B cell (primary cell): ENCODE measurements at regions of chr2 and their contacts with region 1.

Region 1: GRCh38 chr2:12716282-12717190 is at the start of gene TRIB2:
- DNase-seq: peak; percentile 94
- ATAC-seq: peak; percentile 83
- H3K4me3 ChIP-seq: peak within 1 kb of the TSS; percentile 79 to 99 (median 93)
- H3K4me3 Mint-ChIP-seq: peak within 1 kb of the TSS; percentile 93
- H3K27ac ChIP-seq: peak within 1 kb of the TSS; percentile 79 to 89
- H3K27ac Mint-ChIP-seq: peak within 1 kb of the TSS; percentile 92
- H3K4me1 ChIP-seq: peaks cover 31 to 36% of the 10 kb centered on the region in 2 donors
- H3K4me1 Mint-ChIP-seq: peaks cover 47% of the 10 kb centered on the region
- H3K27me3 ChIP-seq: no peaks in the 10 kb centered on the region
- H3K27me3 Mint-ChIP-seq: no peaks in the 10 kb centered on the region
- CTCF ChIP-seq: peak; percentile 63
- total RNA-seq, gene TRIB2: 35.0 and 36.3 TPM in 2 replicates

Region 2: DNA sequence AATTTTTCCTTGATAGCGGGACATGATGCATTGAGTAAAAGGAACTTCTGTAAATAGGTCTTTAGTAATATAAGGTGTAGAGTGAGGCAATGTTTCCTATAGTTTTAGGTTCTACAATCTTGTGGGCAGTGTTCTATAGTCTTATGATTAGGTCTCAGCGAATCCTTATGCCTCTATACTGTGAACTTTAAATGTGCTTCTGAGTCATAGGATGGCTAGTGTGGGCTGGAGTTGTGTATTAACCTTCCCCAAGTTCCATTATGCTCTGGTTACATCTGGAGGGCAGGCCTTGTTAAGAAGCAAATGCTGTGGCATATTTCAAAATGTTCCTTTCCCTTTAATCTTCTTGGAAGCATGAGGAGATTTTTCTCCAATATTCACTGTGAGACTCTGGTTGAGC is 1445.6 kb before region 1 on chr2:
- CTCF ChIA-PET with region 1: no interaction called
- POLR2A ChIA-PET with region 1: no interaction called
- intact Hi-C with region 1: no loop called
- DNase-seq: no peak
- ATAC-seq: no peak
- H3K4me3 ChIP-seq: no peak overlapping the region
- H3K4me3 Mint-ChIP-seq: no peak overlapping the region
- H3K27ac ChIP-seq: no peak overlapping the region
- H3K27ac Mint-ChIP-seq: no peak overlapping the region
- H3K4me1 ChIP-seq: peaks cover 0 to 2% of the 10 kb centered on the region in 2 donors
- H3K4me1 Mint-ChIP-seq: peaks cover 11% of the 10 kb centered on the region
- H3K27me3 ChIP-seq: no peaks in the 10 kb centered on the region
- H3K27me3 Mint-ChIP-seq: no peaks in the 10 kb centered on the region
- CTCF ChIP-seq: no peak

Region 3: DNA sequence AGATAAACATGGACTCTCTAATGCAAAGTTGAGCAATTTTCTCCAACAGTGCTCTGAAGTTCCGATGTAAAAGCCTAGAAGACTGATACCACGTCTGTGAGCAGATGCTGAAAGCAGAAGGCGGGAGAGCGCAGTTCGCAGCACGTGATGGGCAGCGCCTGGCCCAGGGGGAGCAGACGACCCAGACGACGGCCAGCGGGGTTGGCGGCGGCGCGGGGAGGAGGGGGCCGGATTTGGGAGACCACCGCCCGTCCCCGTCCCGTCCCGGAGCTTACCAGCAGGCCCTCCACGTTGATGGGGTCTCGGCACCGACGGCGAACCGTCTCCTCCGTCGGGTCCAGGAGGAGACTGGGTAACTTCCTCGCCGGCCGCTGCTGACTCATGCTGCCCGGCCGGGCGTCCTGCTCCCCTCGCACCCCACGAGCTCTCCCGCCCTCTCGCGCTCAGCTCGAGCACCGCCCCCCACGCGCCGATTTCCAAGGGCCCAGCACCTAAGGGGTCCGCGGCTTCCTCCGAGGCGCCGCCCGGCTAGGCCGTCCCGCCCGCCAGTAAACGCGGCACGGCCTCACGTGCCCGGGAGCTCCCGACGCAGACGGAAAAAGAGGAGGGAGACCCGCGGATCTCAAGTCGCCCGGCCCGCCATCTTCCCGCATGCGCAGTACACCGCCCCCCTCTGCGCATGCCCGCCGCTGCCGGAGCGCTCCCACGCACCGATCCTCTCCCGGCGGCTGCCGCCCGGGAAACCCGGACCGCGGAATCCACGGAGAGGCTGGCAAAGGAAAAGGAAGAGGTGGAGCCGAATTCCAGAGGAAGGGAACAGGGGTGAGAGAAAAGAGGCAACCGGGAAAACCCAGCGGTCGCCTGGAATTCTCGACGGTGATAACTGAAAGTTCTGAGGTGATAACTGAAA is 1250.8 kb before region 1 on chr2 and contains the start of gene E2F6:
- CTCF ChIA-PET with region 1: no interaction called
- POLR2A ChIA-PET with region 1: no interaction called
- intact Hi-C with region 1: loop called (anchors 10 kb)
- DNase-seq: peak; percentile 88
- ATAC-seq: peak; percentile 73
- H3K4me3 ChIP-seq: peak within 1 kb of the TSS; percentile 66 to 97 (median 92)
- H3K4me3 Mint-ChIP-seq: peak within 1 kb of the TSS; percentile 97
- H3K27ac ChIP-seq: peak within 1 kb of the TSS; percentile 1 to 79
- H3K27ac Mint-ChIP-seq: peak within 1 kb of the TSS; percentile 94
- H3K4me1 ChIP-seq: peaks cover 7 to 13% of the 10 kb centered on the region in 2 donors
- H3K4me1 Mint-ChIP-seq: peaks cover 23% of the 10 kb centered on the region
- H3K27me3 ChIP-seq: no peaks in the 10 kb centered on the region
- H3K27me3 Mint-ChIP-seq: no peaks in the 10 kb centered on the region
- CTCF ChIP-seq: no peak
- total RNA-seq, gene E2F6: 10.0 and 10.1 TPM in 2 replicates

Region 4: DNA sequence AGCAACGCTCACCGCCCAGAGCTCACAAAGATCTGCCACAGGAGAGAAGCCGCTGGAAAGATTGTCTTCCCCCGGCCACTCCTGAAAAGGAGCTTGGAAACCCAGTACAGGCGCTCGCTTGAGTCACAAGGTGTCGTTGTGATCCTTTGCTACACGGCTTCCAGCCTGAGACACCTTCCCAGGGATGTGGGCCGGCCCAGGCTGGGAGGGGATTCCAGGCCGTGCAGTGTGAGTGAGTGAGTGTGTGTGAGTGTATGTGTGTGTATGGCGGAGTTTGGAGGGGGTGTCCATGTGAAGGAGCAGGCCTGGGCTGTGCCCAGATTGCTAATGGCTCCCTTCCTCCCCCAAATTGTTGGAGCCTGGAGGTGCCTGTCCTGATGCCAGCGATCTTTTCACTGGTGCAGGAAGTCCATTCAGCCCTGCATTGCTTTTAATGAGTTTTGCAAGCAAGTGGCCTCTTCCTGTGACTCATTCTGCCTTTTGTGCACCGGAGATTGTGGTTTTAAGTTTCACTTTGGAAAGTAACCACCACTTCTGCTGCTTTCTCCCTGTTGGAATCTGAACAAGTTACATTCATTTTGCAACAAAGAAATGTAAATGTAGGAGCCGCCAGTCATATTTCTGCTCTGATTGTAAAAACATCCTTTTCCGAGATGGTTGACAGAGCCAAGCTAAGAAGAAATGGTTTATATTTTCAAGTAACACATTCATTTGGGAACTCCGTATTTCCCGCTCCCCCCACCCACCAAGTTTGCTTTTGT is 886.4 kb before region 1 on chr2:
- CTCF ChIA-PET with region 1: interaction called, 65 read pairs
- POLR2A ChIA-PET with region 1: no interaction called
- intact Hi-C with region 1: loop called (anchors 1 kb)
- DNase-seq: peak; percentile 58
- ATAC-seq: peak; percentile 59
- H3K4me3 ChIP-seq: peak overlapping the region in 4 of 5 experiments; percentile 3 to 34 (median 20)
- H3K4me3 Mint-ChIP-seq: peak overlapping the region; percentile 83
- H3K27ac ChIP-seq: peak overlapping the region; percentile 40 to 64
- H3K27ac Mint-ChIP-seq: peak overlapping the region; percentile 78
- H3K4me1 ChIP-seq: peaks cover 42 to 63% of the 10 kb centered on the region in 2 donors
- H3K4me1 Mint-ChIP-seq: peaks cover 61% of the 10 kb centered on the region
- H3K27me3 ChIP-seq: no peaks in the 10 kb centered on the region
- H3K27me3 Mint-ChIP-seq: no peaks in the 10 kb centered on the region
- CTCF ChIP-seq: no peak

Region 5: GRCh38 chr2:12326449-12327190 is 389.9 kb before region 1 on chr2:
- CTCF ChIA-PET with region 1: interaction called, 16 read pairs
- POLR2A ChIA-PET with region 1: no interaction called
- intact Hi-C with region 1: no loop called
- DNase-seq: peak; percentile 53
- ATAC-seq: peak; percentile 33
- H3K4me3 ChIP-seq: no peak overlapping the region
- H3K4me3 Mint-ChIP-seq: peak overlapping the region; percentile 12
- H3K27ac ChIP-seq: no peak overlapping the region
- H3K27ac Mint-ChIP-seq: peak overlapping the region; percentile 17
- H3K4me1 ChIP-seq: peaks cover 14 to 20% of the 10 kb centered on the region in 2 donors
- H3K4me1 Mint-ChIP-seq: peaks cover 24% of the 10 kb centered on the region
- H3K27me3 ChIP-seq: no peaks in the 10 kb centered on the region
- H3K27me3 Mint-ChIP-seq: no peaks in the 10 kb centered on the region
- CTCF ChIP-seq: peak; percentile 29

Region 6: GRCh38 chr2:12507295-12507694 is 209.2 kb before region 1 on chr2:
- CTCF ChIA-PET with region 1: interaction called, 9 read pairs
- POLR2A ChIA-PET with region 1: interaction called, 12 read pairs
- intact Hi-C with region 1: loop called (anchors 5 kb)
- DNase-seq: peak; percentile 46
- ATAC-seq: peak; percentile 81
- H3K4me3 ChIP-seq: peak overlapping the region in 1 of 5 experiments; percentile 3
- H3K4me3 Mint-ChIP-seq: peak overlapping the region; percentile 32
- H3K27ac ChIP-seq: no peak overlapping the region
- H3K27ac Mint-ChIP-seq: no peak overlapping the region
- H3K4me1 ChIP-seq: peaks cover 33 to 37% of the 10 kb centered on the region in 2 donors
- H3K4me1 Mint-ChIP-seq: peaks cover 37% of the 10 kb centered on the region
- H3K27me3 ChIP-seq: peaks cover 0 to 22% (median 13%) of the 10 kb centered on the region in 4 experiments
- H3K27me3 Mint-ChIP-seq: peaks cover 50% of the 10 kb centered on the region
- CTCF ChIP-seq: no peak

Region 7: GRCh38 chr2:12737738-12738485 is 21.4 kb after region 1 on chr2:
- CTCF ChIA-PET with region 1: interaction called, 13 read pairs
- POLR2A ChIA-PET with region 1: no interaction called
- intact Hi-C with region 1: no loop called
- DNase-seq: no peak
- ATAC-seq: no peak
- H3K4me3 ChIP-seq: no peak overlapping the region
- H3K4me3 Mint-ChIP-seq: no peak overlapping the region
- H3K27ac ChIP-seq: no peak overlapping the region
- H3K27ac Mint-ChIP-seq: no peak overlapping the region
- H3K4me1 ChIP-seq: peaks cover 0 to 3% of the 10 kb centered on the region in 2 donors
- H3K4me1 Mint-ChIP-seq: peaks cover 26% of the 10 kb centered on the region
- H3K27me3 ChIP-seq: no peaks in the 10 kb centered on the region
- H3K27me3 Mint-ChIP-seq: no peaks in the 10 kb centered on the region
- CTCF ChIP-seq: no peak